Panc1 (cell line): ENCODE measurements at regions of chr11 and their contacts with region 1.

Region 1: DNA sequence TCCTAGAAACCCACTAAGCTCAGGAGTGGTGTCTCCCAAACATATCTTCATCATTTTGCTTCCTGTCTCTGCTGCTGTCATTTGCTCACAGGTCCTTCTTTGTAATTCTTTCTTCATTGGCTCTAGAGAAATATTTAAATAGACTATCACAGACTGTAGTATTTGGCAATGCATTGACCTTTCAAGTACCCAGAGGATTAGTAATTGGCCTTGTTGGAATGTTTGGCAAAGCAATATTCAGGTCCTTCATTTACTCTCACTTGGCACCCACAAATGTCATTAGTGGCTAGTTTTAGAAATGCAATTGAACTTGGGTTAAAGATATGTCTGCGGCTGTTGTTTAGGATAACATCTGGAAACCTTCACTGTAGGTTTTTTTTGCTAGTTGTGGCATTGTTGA is 11.6 kb downstream of the OR4C5 start:
- DNase-seq: no peak
- ATAC-seq: no peak
- H3K4me3 ChIP-seq: no peak overlapping the region
- H3K27ac ChIP-seq: no peak overlapping the region
- H3K4me1 ChIP-seq: no peaks in the 10 kb centered on the region
- H3K27me3 ChIP-seq: no peaks in the 10 kb centered on the region
- CTCF ChIP-seq: no peak

Region 2: GRCh38 chr11:50030193-50030592 is 1675.5 kb after region 1 on chr11:
- CTCF ChIA-PET with region 1: no interaction called
- POLR2A ChIA-PET with region 1: no interaction called
- in situ Hi-C with region 1: loop called (anchors 5 kb)
- intact Hi-C with region 1: no loop called
- DNase-seq: no peak
- ATAC-seq: no peak
- H3K4me3 ChIP-seq: no peak overlapping the region
- H3K27ac ChIP-seq: no peak overlapping the region
- H3K4me1 ChIP-seq: no peaks in the 10 kb centered on the region
- H3K27me3 ChIP-seq: no peaks in the 10 kb centered on the region
- CTCF ChIP-seq: no peak